ENCODE measurements at regions of chr11 and their contacts with region 1.

Region 1: GRCh38 chr11:34653826-34654490 is 33.1 kb downstream of the EHF start:
- DNase-seq: no peak
- ATAC-seq: peak; percentile 26
- H3K4me3 ChIP-seq: no peak overlapping the region
- H3K4me3 Mint-ChIP-seq: no peak overlapping the region
- H3K27ac ChIP-seq: no peak overlapping the region
- H3K27ac Mint-ChIP-seq: peak overlapping the region in 1 of 9 donors; percentile 29
- H3K4me1 ChIP-seq: peaks cover 21 to 30% of the 10 kb centered on the region in 2 donors
- H3K4me1 Mint-ChIP-seq: peaks cover 13 to 44% (median 32%) of the 10 kb centered on the region in 7 donors
- H3K27me3 ChIP-seq: no peaks in the 10 kb centered on the region
- H3K27me3 Mint-ChIP-seq: peaks cover 13 to 67% (median 40%) of the 10 kb centered on the region in 5 donors

Region 2: DNA sequence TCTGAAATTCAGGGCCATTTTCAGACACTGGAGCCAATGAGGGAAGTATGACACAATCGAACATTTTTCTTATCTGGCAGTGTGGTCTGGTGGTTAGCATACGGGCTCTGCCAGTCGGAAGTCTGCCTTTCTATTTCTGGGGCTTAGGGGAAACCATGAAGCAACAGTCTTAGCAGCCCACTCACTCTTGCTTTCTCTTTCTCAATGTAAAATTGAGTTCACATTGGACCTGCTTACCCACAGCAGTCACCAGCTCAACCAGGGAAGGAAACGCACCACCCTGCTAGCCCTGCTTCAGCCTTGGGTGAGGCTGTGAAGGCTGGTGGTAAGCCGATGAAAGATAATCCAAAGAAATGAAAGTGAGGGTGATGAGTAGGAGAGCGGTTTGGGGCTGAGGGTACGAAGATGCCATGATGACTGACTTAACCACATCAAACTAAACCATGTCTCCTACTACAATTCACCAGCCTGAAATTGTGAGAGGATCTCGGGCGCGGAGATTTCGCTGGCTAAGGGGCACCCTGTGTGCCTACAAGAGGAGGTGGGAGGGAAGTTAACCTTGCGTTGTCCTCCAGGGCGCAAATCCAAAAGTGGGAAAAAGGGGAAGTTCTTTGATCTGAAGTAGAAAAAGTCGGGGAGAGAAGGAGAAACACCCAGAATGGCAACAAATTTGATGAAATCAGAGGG is 760.1 kb before region 1 on chr11:
- CTCF ChIA-PET with region 1: no interaction called
- POLR2A ChIA-PET with region 1: no interaction called
- intact Hi-C with region 1: loop called in 1 of 2 experiments (anchors 5 kb)
- DNase-seq: peak; percentile 20 to 77 (median 73)
- ATAC-seq: peak; percentile 88
- H3K4me3 ChIP-seq: peak overlapping the region; percentile 54
- H3K4me3 Mint-ChIP-seq: peak overlapping the region; percentile 35 to 93 (median 86)
- H3K27ac ChIP-seq: no peak overlapping the region
- H3K27ac Mint-ChIP-seq: peak overlapping the region in 8 of 9 donors; percentile 12 to 90 (median 76)
- H3K4me1 ChIP-seq: peaks cover 18 to 20% of the 10 kb centered on the region in 2 donors
- H3K4me1 Mint-ChIP-seq: peaks cover 24 to 48% (median 34%) of the 10 kb centered on the region in 7 donors
- H3K27me3 ChIP-seq: no peaks in the 10 kb centered on the region
- H3K27me3 Mint-ChIP-seq: peaks cover 23 to 77% (median 49%) of the 10 kb centered on the region in 5 donors

Region 3: GRCh38 chr11:34243726-34244464 is 410.1 kb before region 1 on chr11:
- CTCF ChIA-PET with region 1: no interaction called
- POLR2A ChIA-PET with region 1: no interaction called
- intact Hi-C with region 1: loop called in 1 of 2 experiments (anchors 5 kb)
- DNase-seq: peak in 1 of 9 donors; percentile 54
- ATAC-seq: no peak
- H3K4me3 ChIP-seq: no peak overlapping the region
- H3K4me3 Mint-ChIP-seq: peak overlapping the region in 1 of 10 donors; percentile 53
- H3K27ac ChIP-seq: no peak overlapping the region
- H3K27ac Mint-ChIP-seq: peak overlapping the region in 2 of 9 donors; percentile 4 to 13
- H3K4me1 ChIP-seq: peaks cover 12 to 17% of the 10 kb centered on the region in 2 donors
- H3K4me1 Mint-ChIP-seq: peaks cover 16 to 77% (median 33%) of the 10 kb centered on the region in 7 donors
- H3K27me3 ChIP-seq: no peaks in the 10 kb centered on the region
- H3K27me3 Mint-ChIP-seq: peaks cover 0 to 10% (median 0%) of the 10 kb centered on the region in 5 donors

Region 4: DNA sequence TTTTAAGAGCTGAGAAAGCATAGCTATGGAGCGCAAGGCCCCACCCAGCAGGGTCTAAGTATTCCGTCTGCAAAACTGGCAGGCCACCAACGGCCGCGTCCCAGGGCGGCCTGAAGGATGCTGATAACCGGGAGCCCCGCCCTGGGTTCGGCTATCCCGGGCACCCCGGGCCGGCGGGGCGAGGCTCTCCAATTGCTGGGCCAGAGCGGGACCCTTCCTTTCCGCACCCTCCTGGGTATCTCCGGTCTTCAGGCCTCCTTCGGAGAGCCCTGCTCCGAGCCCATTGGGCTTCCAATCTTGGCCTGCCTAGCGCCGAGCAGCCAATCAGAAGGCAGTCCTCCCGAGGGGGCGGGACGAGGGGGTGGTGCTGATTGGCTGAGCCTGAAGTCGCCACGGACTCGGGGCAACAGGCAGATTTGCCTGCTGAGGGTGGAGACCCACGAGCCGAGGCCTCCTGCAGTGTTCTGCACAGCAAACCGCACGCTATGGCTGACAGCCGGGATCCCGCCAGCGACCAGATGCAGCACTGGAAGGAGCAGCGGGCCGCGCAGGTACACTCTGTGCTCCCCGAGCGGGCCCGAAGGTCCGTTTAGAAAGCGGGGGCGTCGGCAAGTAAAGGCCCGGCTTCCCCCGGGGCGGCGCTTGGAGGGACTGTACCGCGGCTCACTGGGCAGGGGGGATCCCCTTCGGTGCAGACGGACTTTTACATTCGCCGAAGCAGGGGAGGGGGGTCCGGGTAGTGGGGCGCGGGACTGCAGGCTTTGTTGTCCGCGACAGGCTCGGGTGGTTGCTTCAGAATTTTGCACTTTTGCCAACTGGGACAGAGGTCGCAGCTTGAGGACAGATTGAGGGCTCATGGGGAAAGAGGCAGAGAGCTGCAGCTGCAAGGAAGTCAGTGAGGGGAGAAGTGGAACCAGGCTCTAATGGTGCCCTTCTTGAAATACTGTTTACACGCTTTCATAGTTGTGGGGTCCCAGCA is 215.1 kb before region 1 on chr11 and contains the start of gene CAT:
- CTCF ChIA-PET with region 1: no interaction called
- POLR2A ChIA-PET with region 1: no interaction called
- intact Hi-C with region 1: loop called in 1 of 2 experiments (anchors 5 kb)
- DNase-seq: peak; percentile 94 to 98 (median 97)
- ATAC-seq: peak; percentile 98
- H3K4me3 ChIP-seq: peak within 1 kb of the TSS; percentile 90
- H3K4me3 Mint-ChIP-seq: peak within 1 kb of the TSS; percentile 88 to 98 (median 96)
- H3K27ac ChIP-seq: peak within 1 kb of the TSS; percentile 79
- H3K27ac Mint-ChIP-seq: peak within 1 kb of the TSS; percentile 89 to 97 (median 93)
- H3K4me1 ChIP-seq: peaks cover 7 to 19% of the 10 kb centered on the region in 2 donors
- H3K4me1 Mint-ChIP-seq: peaks cover 21 to 47% (median 35%) of the 10 kb centered on the region in 7 donors
- H3K27me3 ChIP-seq: no peaks in the 10 kb centered on the region
- H3K27me3 Mint-ChIP-seq: no peaks in the 10 kb centered on the region
- total RNA-seq, gene CAT: 23.3 to 55.9 (median 42.6) TPM

Region 5: DNA sequence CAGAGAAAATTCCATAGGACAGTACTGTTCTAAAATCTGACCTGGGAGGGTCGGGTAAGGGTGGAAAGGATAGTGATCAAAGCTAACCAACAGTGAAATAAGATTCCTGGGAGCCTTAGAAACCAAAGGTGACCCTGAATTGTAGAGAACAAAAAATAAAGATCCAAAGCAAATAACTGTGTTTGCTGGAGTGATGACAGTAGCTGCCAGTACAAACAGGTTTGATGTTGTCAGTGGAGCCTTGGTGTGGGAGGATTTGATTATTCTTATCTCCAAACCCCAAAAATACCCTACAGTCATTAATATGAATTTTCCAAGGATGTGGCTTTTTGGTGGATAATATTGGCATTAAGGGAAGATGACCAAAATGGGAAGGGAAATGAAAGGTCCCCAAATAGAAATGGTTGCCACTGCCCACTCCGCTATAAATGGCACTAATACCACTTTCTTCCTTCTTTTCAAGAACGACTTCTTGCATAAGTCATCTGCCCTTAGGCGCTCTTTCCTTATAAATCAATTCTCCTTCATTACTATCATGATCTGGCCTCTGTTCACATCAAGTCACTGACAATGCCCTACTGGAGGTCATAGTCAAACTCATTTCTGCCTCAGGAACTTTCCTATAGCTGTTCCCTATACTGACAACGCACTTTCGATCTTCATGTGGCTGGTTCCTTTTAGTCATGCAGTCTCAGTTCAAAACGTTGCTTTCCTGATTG is 11.3 kb after region 1 on chr11:
- CTCF ChIA-PET with region 1: no interaction called
- POLR2A ChIA-PET with region 1: no interaction called
- intact Hi-C with region 1: loop called in 1 of 2 experiments (anchors 2 kb)
- DNase-seq: no peak
- ATAC-seq: no peak
- H3K4me3 ChIP-seq: no peak overlapping the region
- H3K4me3 Mint-ChIP-seq: no peak overlapping the region
- H3K27ac ChIP-seq: no peak overlapping the region
- H3K27ac Mint-ChIP-seq: no peak overlapping the region
- H3K4me1 ChIP-seq: no peaks in the 10 kb centered on the region
- H3K4me1 Mint-ChIP-seq: peaks cover 0 to 3% (median 0%) of the 10 kb centered on the region in 7 donors
- H3K27me3 ChIP-seq: no peaks in the 10 kb centered on the region
- H3K27me3 Mint-ChIP-seq: peaks cover 12 to 54% (median 33%) of the 10 kb centered on the region in 5 donors

Measured in naive thymus-derived CD4-positive, alpha-beta T cell (primary cell).